Gastrocnemius medialis (tissue), 4 donors: ENCODE measurements at regions of chr16 and their contacts with region 1.

Region 1: DNA sequence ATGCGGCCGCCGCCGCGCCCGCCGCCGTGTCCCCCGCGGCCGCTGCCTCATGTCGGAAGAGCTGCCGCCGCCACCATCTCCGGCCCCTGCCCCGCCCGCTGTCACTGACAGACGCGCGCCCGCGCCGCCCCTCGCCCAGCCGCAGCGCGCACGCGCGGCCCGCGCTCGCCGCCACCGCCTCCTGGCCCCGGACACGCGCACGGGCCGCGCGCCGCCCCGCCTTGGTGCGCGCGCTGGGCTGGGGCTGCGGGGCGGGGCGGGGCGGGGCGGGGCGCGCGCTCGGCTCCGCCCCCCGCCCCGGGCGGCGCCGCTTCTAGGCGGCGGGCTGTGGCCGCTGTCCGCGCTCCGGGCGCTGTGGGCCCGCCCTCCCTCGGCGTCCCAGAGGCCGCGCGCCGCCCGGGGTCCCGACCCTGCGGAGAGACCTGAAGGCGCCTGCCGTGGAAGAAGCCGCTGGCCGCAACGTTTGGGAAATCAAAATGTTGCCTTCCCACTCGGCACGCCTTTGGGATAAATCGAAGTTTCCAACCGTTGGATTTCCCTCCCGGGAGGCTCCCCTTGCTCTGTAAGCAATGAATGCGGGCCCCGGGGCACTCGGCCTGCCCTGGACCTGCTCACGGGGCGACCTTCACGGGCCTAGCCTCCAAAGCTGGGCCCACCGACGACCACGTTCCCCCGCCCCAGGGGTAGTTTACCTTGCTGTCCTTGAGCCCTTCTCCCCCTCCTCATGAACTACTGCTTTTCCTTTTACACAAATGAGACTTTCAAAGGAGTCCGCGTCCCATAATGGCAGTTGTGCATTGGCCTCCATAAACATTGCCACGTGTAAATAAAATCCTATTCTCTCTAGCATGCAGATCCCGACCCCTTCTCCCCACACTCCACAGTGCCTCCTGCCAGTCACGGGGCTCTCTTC is at the start of gene ADCY9:
- DNase-seq: peak; percentile 64 to 74
- ATAC-seq: peak; percentile 63 to 66
- H3K4me3 ChIP-seq: peak within 1 kb of the TSS; percentile 66 to 82 (median 72)
- H3K27ac ChIP-seq: peak within 1 kb of the TSS; percentile 83 to 93 (median 90)
- H3K4me1 ChIP-seq: peaks cover 37 to 42% of the 10 kb centered on the region in 2 donors
- H3K27me3 ChIP-seq: no peaks in the 10 kb centered on the region
- CTCF ChIP-seq: peak in 1 of 5 experiments; percentile 6
- POLR2A ChIP-seq: peak; percentile 81 to 88
- total RNA-seq, gene ADCY9: 84.9 to 223 (median 163) TPM

Region 2: GRCh38 chr16:3611146-3611975 is 505.2 kb before region 1 on chr16 and contains the start of gene SLX4:
- in situ Hi-C with region 1: no loop called
- intact Hi-C with region 1: loop called (anchors 5 kb)
- DNase-seq: peak; percentile 72 to 86
- ATAC-seq: peak; percentile 91 to 96
- H3K4me3 ChIP-seq: peak within 1 kb of the TSS; percentile 86 to 100 (median 98)
- H3K27ac ChIP-seq: peak within 1 kb of the TSS; percentile 77 to 92 (median 88)
- H3K4me1 ChIP-seq: peaks cover 16 to 23% of the 10 kb centered on the region in 2 donors
- H3K27me3 ChIP-seq: no peaks in the 10 kb centered on the region
- CTCF ChIP-seq: no peak
- POLR2A ChIP-seq: peak; percentile 76 to 79
- total RNA-seq, gene SLX4: 1.8 to 3.6 (median 2.8) TPM

Region 3: DNA sequence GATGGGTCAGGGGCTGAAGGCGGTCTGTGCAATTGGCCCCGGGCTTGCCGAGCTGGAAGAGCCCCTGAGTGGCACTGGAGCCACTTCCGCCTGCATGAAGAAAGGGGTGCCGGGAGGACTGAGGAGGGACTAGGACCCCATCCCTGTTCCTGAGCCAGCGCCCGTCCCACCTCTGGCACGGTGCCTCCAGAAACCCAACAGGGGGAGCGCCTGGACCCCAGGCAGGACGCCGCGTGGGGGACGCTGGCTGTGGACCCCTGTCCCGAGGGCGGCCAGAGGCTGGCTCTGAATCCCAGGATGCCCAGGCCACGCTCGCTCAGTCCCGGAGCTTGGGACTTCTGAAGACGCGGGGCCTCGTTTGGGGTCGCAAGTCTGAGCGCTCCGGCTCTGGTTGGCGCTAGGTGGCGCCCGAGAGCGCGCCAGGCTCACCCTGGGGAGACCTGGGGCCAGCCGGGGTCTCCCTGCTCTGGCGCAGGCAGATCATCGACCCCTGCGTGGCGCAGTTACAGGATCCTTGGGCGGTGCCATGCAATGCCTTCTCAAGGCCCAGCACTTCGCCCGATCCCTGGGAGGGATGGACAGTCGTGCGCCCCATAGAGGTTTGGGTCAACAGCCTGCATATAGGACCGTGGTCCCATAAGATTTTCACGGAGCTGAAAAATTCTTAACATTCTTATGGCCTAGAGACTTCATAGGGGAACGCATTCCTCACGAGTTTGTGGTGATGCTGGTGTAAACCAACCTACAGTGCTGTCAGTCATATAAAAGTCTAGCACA is 177.6 kb before region 1 on chr16:
- in situ Hi-C with region 1: no loop called
- intact Hi-C with region 1: loop called (anchors 2 kb)
- DNase-seq: no peak
- ATAC-seq: peak; percentile 41 to 76
- H3K4me3 ChIP-seq: peak overlapping the region; percentile 51 to 65 (median 60)
- H3K27ac ChIP-seq: no peak overlapping the region
- H3K4me1 ChIP-seq: peaks cover 3 to 8% of the 10 kb centered on the region in 2 donors
- H3K27me3 ChIP-seq: no peaks in the 10 kb centered on the region
- CTCF ChIP-seq: peak; percentile 77 to 98 (median 89)
- POLR2A ChIP-seq: no peak

Region 4: GRCh38 chr16:3983081-3983520 is 133.5 kb before region 1 on chr16:
- in situ Hi-C with region 1: loop called in 2 of 4 experiments (anchors 10 to 25 kb)
- intact Hi-C with region 1: loop called (anchors 1 kb)
- DNase-seq: peak; percentile 50 to 78
- ATAC-seq: peak; percentile 79 to 98
- H3K4me3 ChIP-seq: no peak overlapping the region
- H3K27ac ChIP-seq: peak overlapping the region in 1 of 4 donors; percentile 16
- H3K4me1 ChIP-seq: no peaks in the 10 kb centered on the region
- H3K27me3 ChIP-seq: no peaks in the 10 kb centered on the region
- CTCF ChIP-seq: peak; percentile 64 to 77 (median 64)
- POLR2A ChIP-seq: no peak

Region 5: GRCh38 chr16:4053301-4053845 is 63.2 kb before region 1 on chr16:
- in situ Hi-C with region 1: no loop called
- intact Hi-C with region 1: loop called (anchors 2 kb)
- DNase-seq: peak; percentile 94 to 97
- ATAC-seq: peak; percentile 85 to 88
- H3K4me3 ChIP-seq: peak overlapping the region; percentile 8 to 47 (median 42)
- H3K27ac ChIP-seq: peak overlapping the region; percentile 87 to 98 (median 90)
- H3K4me1 ChIP-seq: peaks cover 37 to 52% of the 10 kb centered on the region in 2 donors
- H3K27me3 ChIP-seq: no peaks in the 10 kb centered on the region
- CTCF ChIP-seq: no peak
- POLR2A ChIP-seq: peak in 1 of 2 donors; percentile 48

Region 6: DNA sequence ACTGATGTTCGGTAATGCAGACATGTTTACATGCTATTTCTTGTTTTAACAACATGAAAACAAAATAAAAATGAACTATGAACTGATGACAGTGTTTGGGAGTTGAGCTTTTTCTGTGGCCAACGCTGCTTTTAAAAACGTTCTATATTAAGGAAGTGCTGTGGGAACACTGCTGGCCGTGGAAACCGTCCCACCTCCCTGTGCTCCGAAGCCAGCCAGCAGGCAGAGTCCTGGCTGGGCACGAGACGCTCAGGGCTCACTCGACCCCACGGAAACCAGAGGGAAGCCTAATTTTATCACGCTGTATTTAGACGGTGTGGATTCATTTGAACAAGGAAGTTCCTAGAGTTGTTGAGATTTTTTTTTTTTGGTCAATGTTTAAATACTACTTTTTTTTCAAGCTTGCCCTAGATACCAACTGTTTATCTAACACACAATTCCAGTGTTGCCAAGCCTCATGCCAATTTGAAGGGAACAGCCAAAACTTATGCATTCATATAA is 26.2 kb before region 1 on chr16:
- in situ Hi-C with region 1: no loop called
- intact Hi-C with region 1: loop called (anchors 2 kb)
- DNase-seq: peak; percentile 66 to 74
- ATAC-seq: peak; percentile 8 to 9
- H3K4me3 ChIP-seq: peak overlapping the region; percentile 2 to 15 (median 6)
- H3K27ac ChIP-seq: peak overlapping the region; percentile 90 to 95 (median 94)
- H3K4me1 ChIP-seq: peaks cover 88% of the 10 kb centered on the region in 2 donors
- H3K27me3 ChIP-seq: no peaks in the 10 kb centered on the region
- CTCF ChIP-seq: no peak
- POLR2A ChIP-seq: peak in 1 of 2 donors; percentile 38

Region 7: DNA sequence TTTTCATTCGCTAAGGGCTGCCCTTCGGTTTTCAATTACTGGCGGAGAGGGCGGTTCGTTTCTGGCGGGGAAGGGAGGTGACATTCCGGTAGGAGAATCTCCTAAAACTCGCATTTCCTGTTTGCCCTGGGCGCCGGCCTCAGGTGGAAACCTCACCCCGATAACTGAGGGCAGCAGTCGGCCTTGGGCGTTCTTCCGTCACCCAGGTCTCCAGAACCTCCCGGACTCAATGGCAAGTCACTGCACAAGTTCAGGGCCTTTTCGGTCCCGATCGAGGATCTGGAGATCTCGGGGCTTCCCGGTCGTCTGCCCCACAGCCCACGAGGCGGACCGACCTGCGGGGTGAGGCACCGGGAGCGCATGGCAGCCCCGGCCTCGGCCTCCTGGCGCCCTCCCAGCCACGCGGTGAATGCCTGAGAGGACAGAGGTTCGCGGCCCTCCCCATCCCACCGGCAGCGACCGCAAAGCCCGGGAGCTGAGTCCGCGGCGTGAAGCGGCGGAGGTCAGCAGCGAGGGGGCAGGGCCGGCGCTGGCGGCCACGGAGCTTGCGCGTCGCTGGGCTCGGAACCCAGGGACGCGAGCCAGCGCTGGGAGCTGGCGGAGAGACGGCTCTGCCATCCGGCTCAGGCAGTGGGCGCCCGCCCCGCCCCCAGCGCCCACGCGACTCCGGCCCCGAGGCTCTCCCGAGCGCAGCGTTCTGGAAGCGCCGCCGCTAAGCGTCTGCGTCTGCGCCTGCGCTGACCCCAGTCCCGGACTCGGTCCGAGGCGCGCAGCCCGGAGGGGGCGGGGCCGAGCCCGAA is 66.8 kb after region 1 on chr16:
- in situ Hi-C with region 1: no loop called
- intact Hi-C with region 1: loop called (anchors 1 kb)
- DNase-seq: peak; percentile 80 to 90
- ATAC-seq: peak; percentile 83 to 90
- H3K4me3 ChIP-seq: peak overlapping the region; percentile 65 to 96 (median 76)
- H3K27ac ChIP-seq: peak overlapping the region; percentile 93 to 98 (median 94)
- H3K4me1 ChIP-seq: peaks cover 4 to 11% of the 10 kb centered on the region in 2 donors
- H3K27me3 ChIP-seq: no peaks in the 10 kb centered on the region
- CTCF ChIP-seq: peak in 3 of 5 experiments; percentile 22 to 51 (median 43)
- POLR2A ChIP-seq: no peak